Transverse colon (tissue), 4 donors: ENCODE measurements at regions of chr2 and their contacts with region 1.

Region 1: DNA sequence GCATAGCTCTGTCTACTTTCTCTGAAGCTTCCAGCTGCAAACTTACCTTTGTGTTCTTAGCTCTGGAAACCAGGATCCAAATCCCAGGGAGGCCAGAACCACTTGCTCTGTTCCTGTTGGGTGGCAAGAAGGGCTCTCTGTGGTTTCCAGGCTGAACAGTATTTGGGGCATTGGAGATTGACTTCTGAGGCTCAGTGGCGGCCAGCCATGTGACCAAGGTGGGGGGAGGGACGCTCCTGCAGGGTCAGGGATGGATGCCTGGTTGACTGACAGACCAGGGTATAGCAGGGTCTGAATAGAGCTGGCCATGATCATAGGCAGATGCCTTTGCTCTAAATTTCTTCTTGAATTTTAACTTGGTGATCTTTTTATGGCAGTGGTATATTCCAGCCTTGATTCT is 15.1 kb downstream of the SLC4A5 start:
- DNase-seq: no peak
- H3K4me3 ChIP-seq: no peak overlapping the region
- H3K27ac ChIP-seq: no peak overlapping the region
- H3K4me1 ChIP-seq: no peaks in the 10 kb centered on the region
- H3K27me3 ChIP-seq: no peaks in the 10 kb centered on the region
- CTCF ChIP-seq: no peak
- EP300 ChIP-seq: no peak
- POLR2A ChIP-seq: no peak

Region 2: DNA sequence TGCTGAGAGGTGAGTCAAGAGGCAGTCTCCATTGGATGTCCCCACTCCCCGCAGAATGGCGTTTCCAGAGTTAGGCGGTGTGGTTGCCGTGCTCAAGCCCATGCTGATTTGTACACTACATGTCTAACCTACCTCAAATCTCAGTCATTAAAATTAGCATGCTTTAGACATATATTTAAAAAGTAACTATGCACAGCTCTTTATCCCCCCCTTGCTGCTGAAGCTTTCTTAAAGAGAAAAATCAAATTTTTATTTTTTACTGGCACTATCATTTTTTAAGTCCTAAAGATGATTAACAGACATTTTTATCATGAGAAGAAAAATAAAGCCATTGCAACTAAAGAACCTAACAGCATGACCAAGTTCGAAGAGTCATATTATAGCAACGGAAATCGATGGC is 223.2 kb before region 1 on chr2:
- in situ Hi-C with region 1: no loop called
- intact Hi-C with region 1: no loop called
- DNase-seq: no peak
- H3K4me3 ChIP-seq: no peak overlapping the region
- H3K27ac ChIP-seq: no peak overlapping the region
- H3K4me1 ChIP-seq: no peaks in the 10 kb centered on the region
- H3K27me3 ChIP-seq: no peaks in the 10 kb centered on the region
- CTCF ChIP-seq: no peak
- EP300 ChIP-seq: no peak
- POLR2A ChIP-seq: no peak

Region 3: DNA sequence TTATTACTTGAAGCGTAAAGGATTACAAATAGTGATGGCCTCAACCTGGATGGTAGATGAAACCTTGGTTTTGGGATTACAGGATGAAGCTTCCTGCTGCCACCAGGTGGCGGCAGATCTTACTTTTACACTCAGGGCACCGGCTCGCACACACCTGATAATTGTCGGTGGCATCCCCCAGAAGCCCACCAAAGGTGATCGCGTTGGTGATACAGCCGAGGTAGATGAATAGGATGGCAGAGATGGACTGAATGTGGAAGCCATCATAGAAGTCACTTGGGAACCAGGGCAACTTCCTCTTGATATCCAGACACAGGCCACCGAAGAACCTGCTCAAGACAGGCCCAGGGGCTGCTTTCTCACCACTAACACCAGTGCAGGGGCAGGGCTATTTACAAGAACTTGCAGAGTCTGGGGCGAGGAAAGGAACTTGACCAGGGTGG is 77.9 kb before region 1 on chr2:
- in situ Hi-C with region 1: loop called in 2 of 4 experiments (anchors 10 kb)
- intact Hi-C with region 1: no loop called
- DNase-seq: peak; percentile 53
- H3K4me3 ChIP-seq: no peak overlapping the region
- H3K27ac ChIP-seq: no peak overlapping the region
- H3K4me1 ChIP-seq: no peaks in the 10 kb centered on the region
- H3K27me3 ChIP-seq: no peaks in the 10 kb centered on the region
- CTCF ChIP-seq: peak; percentile 78 to 80 (median 80)
- EP300 ChIP-seq: no peak
- POLR2A ChIP-seq: no peak